Posterior vena cava (tissue), 2 donors: ENCODE measurements at regions of chr9 and their contacts with region 1.

Region 1: DNA sequence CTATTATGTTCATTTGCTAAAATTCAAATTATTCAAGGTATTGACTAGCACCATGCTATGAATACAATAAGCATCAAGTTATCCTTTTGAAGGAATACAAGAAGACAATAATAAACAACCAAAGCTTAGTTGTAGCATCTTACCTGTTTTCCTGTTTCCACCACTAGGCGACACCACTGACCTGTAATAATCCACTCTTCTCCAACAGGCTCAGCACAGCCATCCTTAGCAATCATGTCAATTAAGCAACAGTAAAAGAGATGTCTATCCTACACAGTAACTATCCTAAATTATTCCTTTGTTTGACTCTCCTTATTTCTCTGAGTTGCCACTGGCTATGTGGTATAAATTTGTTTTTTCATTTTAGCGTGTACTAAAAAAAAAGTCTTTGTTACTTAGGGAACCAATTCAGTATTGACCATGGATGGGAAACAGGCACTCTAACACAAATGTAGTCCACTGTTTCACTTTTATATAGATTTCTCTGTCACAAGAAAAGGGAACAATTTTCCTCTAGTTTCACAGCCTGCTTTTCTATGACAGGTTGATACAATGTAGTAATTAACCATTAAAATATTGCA is 46.2 kb downstream of the PCA3 start:
- DNase-seq: no peak

Region 2: GRCh38 chr9:75615284-75615683 is 1195.2 kb before region 1 on chr9:
- intact Hi-C with region 1: no loop called
- DNase-seq: no peak

Region 3: DNA sequence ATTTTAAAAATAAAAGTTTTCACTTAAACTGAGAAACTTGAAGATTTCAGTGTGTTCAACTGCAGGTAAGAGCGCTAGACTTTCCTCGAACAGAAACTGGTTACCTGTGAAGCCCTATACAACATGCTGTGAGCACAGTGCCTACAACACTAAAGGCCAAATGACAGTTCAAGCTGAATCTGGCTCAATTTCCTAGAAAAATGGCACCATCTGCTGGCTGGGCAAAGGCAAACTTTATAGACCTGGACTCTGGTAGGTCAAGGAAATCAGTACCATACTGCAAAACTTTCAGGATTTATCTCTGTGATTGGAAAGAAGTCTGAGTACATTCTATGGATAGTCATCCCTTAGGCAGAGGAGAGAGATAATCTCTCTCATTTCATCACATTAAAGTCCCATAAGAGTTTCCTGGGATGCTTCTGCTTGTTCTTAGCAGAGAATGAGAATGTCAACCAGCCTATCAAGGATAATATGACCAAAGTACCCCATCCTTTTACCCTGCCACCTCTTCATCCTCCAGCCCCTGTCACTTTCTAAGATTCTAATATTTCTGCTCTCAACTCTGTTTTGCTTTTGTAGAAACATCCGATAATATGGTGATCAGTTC is 177.2 kb after region 1 on chr9:
- intact Hi-C with region 1: loop called in 1 of 2 experiments (anchors 5 kb)
- DNase-seq: no peak

Region 4: GRCh38 chr9:77000330-77000729 is 189.9 kb after region 1 on chr9:
- intact Hi-C with region 1: loop called in 1 of 2 experiments (anchors 10 kb)
- DNase-seq: no peak

Region 5: DNA sequence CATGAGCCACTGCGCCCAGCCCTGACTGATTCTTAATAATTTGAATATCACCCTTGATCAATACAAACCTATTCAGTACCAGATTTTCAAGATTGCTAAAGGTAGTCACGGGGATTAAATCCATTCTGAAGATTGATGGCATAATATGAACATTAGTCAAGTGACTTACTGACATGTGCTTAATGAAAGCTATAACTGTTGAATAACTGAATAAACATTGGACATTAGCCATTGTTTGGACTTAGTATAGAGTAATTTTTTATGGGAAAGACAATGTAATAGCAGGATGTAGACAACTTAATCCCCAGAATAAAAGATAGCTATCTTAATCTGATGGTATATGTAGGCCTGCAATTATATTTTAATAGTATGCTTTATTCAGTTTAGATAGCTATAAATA is 331.9 kb after region 1 on chr9:
- intact Hi-C with region 1: loop called in 1 of 2 experiments (anchors 10 kb)
- DNase-seq: no peak